Cardiac septum (tissue), 1 donor: ENCODE measurements at regions of chr10 and their contacts with region 1.

Region 1: GRCh38 chr10:20891338-20891714 is 5.8 kb downstream of the NEBL start:
- DNase-seq: no peak

Region 2: GRCh38 chr10:20313665-20314064 is 577.7 kb before region 1 on chr10:
- intact Hi-C with region 1: no loop called
- DNase-seq: no peak

Region 3: GRCh38 chr10:21525367-21526183 is 634.2 kb after region 1 on chr10 and contains the start of gene SKIDA1:
- intact Hi-C with region 1: loop called (anchors 10 kb)
- DNase-seq: peak; percentile 90
- total RNA-seq, gene SKIDA1: 1.8 TPM